Activated naive CD4-positive, alpha-beta T cell treated with anti-CD3 and anti-CD28 coated beads, Interleukin-2, amount 10 ng/mL, durations not matched to agents 7 days and 5 days (primary cell): ENCODE measurements at regions of chr5 and their contacts with region 1.

Region 1: DNA sequence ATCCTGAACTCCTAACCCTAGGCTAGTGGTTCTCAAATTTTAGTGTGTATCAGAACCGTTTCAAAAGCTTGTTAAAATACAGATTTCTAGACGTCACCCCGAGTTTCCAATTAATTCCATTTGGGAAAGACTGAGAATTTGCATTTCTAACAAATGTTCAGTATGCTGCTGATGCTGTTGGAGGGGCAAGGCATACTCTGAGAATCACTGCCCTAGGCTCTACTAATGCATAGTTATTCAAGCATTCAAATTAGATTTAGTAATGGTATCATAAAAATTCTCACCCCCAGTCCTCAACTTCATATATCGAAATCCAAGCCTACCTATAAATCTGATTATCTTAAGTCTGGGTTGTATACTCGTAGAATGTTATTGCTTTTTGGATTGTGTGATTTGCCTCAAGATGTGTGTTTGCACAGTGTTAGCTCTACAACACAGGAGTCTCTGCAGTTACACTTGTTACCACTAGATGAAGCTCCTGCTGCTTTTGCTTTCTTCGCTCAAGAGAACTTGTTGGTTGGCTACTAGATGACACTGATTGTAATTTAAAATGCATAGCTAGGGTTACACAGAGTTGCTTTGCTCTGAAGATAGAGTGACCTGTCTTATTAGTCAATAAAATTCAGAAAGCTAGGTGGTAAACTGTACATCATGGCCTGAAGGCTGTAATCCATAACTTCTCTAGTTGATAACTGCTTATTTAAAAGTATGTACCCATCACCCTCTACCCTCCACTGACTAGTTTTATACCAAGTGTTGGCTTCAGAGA is 7.5 kb upstream of the ERAP2 start:
- DNase-seq: no peak
- H3K4me3 Mint-ChIP-seq: no peak overlapping the region
- H3K27ac Mint-ChIP-seq: peak overlapping the region; percentile 67
- H3K4me1 Mint-ChIP-seq: peaks cover 50% of the 10 kb centered on the region
- H3K27me3 Mint-ChIP-seq: no peaks in the 10 kb centered on the region

Region 2: DNA sequence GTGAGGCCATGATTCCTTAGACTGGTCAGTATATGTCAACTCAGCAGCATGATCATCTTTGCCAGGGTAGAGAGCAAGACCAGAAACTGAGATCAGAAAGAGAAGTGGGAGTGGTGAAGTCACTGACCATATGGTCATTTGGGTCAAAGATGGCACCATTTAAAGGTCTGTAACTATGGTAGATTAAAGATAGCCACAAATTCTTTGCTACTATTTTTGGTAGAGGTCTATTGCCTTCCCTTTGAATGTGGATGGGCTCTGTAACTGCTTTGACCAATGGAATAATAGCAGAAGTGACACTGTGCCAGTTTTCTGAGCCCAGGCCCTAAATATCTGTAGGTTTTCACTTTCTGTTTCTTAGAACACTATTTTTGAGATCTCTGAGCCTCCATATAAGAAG is 553.4 kb before region 1 on chr5:
- CTCF ChIA-PET with region 1: no interaction called
- DNase-seq: no peak
- H3K4me3 Mint-ChIP-seq: no peak overlapping the region
- H3K27ac Mint-ChIP-seq: no peak overlapping the region
- H3K4me1 Mint-ChIP-seq: no peaks in the 10 kb centered on the region
- H3K27me3 Mint-ChIP-seq: no peaks in the 10 kb centered on the region

Region 3: GRCh38 chr5:96412868-96413449 is 455.8 kb before region 1 on chr5:
- CTCF ChIA-PET with region 1: no interaction called
- DNase-seq: no peak
- H3K4me3 Mint-ChIP-seq: no peak overlapping the region
- H3K27ac Mint-ChIP-seq: no peak overlapping the region
- H3K4me1 Mint-ChIP-seq: no peaks in the 10 kb centered on the region
- H3K27me3 Mint-ChIP-seq: peaks cover 5% of the 10 kb centered on the region

Region 4: DNA sequence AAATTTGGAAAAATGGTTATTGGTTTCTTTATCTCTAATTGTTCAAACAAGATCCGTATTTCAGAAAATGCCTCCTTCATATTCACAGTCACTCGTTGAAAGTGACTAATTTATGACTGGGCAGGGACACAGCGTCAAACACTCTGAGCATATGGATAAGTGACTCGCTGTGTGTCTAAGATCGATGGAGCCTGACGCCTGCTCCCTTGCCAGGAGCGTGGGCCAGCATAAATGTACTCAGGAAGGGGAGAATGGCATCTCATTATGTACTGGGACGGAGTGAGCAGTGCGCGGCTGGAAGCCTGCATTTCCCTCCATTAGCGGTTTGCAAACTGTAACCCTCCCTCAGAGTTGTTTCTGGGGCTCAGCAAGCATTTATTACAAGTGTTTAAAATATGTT is 286.4 kb before region 1 on chr5:
- CTCF ChIA-PET with region 1: no interaction called
- DNase-seq: no peak
- H3K4me3 Mint-ChIP-seq: no peak overlapping the region
- H3K27ac Mint-ChIP-seq: no peak overlapping the region
- H3K4me1 Mint-ChIP-seq: peaks cover 10% of the 10 kb centered on the region
- H3K27me3 Mint-ChIP-seq: peaks cover 18% of the 10 kb centered on the region

Region 5: GRCh38 chr5:96807075-96807654 is 61.6 kb before region 1 on chr5:
- CTCF ChIA-PET with region 1: interaction called, 16 read pairs
- DNase-seq: no peak
- H3K4me3 Mint-ChIP-seq: peak overlapping the region; percentile 96
- H3K27ac Mint-ChIP-seq: peak overlapping the region; percentile 98
- H3K4me1 Mint-ChIP-seq: peaks cover 89% of the 10 kb centered on the region
- H3K27me3 Mint-ChIP-seq: peaks cover 8% of the 10 kb centered on the region

Region 6: DNA sequence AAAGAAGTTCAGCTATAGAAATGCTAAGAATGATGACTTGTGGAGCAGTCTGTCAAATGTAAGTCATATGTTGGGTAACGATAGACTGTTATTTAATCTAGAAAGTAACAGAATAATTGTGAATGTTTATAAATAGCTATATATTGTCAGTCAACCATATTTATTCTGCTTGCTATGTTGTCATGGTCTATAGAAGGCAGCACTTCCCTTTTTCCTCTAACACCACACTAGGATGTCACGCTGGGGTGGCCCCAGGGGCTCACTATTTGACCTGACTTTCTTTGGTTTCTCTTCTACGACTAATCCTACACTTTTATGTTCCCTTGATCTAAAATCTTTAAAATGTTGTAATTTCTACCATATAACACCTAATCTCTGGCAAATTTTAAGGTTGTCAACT is 28.0 kb after region 1 on chr5:
- CTCF ChIA-PET with region 1: interaction called, 23 read pairs
- DNase-seq: no peak
- H3K4me3 Mint-ChIP-seq: peak overlapping the region; percentile 64
- H3K27ac Mint-ChIP-seq: peak overlapping the region; percentile 93
- H3K4me1 Mint-ChIP-seq: peaks cover 58% of the 10 kb centered on the region
- H3K27me3 Mint-ChIP-seq: no peaks in the 10 kb centered on the region

Region 7: DNA sequence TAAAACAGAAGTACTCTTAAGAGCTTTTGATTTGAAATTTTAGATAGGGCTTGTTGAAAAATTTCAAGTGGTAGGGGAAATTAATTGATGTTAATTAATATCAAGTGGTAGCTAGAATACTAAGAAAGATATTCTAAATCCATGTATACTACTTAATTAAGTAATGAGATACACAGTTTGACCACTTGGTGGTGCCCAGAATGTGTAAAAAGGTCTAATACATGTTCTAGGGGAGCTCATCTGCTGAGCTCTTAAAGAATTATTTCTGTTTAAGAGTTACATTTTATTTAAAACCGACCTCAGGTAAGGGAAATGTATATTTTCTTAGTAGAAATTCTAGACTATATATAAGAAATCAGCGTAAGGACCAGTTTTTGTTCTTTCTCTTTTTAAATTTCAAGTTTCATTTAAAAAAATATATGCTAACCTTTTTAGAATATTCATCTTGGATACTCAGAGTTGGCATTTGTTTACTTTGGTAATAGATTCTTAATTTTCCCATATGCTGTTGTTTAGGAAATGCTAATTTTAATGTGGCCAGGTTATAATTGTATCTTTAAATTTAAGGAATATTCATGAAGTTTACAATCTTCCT is 128.6 kb after region 1 on chr5:
- CTCF ChIA-PET with region 1: interaction called, 14 read pairs
- DNase-seq: peak; percentile 39
- H3K4me3 Mint-ChIP-seq: no peak overlapping the region
- H3K27ac Mint-ChIP-seq: no peak overlapping the region
- H3K4me1 Mint-ChIP-seq: peaks cover 29% of the 10 kb centered on the region
- H3K27me3 Mint-ChIP-seq: no peaks in the 10 kb centered on the region

Region 8: DNA sequence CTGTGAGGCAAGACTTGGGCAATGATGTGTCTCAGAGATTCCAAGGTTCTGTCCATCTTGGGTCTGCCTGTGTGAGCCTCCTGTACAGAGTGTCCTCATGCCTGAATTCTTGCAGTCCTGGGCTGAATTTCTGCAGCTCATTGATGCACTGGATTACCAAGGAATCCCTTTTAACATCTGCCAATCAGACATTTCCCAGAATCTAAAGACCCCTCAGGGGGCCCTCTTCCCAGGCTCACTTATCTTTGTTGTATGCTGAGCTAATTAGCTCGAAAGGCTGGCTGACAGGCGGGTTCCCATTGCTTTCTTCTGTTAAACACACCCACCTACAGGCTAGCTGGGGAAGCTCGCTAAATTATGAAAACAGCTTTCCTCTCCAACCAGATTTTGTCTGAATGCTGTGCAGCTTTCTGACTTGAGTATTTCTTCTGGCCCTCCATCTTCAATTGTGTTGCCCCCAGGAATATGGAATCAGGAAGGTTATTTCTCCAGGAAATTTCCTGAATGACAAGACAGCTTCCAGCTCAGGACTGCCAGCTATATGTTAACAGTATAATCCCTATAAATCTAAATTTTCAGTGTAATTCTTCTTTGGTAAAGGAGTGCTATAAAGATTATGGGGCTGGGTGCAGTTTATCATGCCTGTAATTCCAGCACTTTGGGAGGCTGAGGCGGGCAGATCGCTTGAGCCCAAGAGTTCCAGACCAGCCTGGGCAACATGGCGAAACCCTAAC is 273.9 kb after region 1 on chr5 and contains the start of gene LIX1:
- CTCF ChIA-PET with region 1: interaction called, 53 read pairs
- DNase-seq: peak; percentile 58
- H3K4me3 Mint-ChIP-seq: no peak within 1 kb of the TSS
- H3K27ac Mint-ChIP-seq: no peak within 1 kb of the TSS
- H3K4me1 Mint-ChIP-seq: no peaks in the 10 kb centered on the region
- H3K27me3 Mint-ChIP-seq: peaks cover 28% of the 10 kb centered on the region